ENCODE measurements at regions of chr1 and their contacts with region 1.

Region 1: GRCh38 chr1:228989992-228990827 is 254.9 kb downstream of the RHOU start:
- DNase-seq: peak; percentile 93
- H3K4me3 ChIP-seq: no peak overlapping the region
- H3K27ac ChIP-seq: peak overlapping the region; percentile 15 to 82 (median 70)
- H3K4me1 ChIP-seq: peaks cover 0 to 53% (median 44%) of the 10 kb centered on the region in 4 donors
- H3K27me3 ChIP-seq: no peaks in the 10 kb centered on the region
- CTCF ChIP-seq: no peak
- EP300 ChIP-seq: peak in 3 of 4 donors; percentile 31 to 78 (median 40)
- POLR2A ChIP-seq: no peak

Region 2: GRCh38 chr1:228366866-228367741 is 623.1 kb before region 1 on chr1:
- intact Hi-C with region 1: no loop called
- DNase-seq: peak; percentile 58
- H3K4me3 ChIP-seq: no peak overlapping the region
- H3K27ac ChIP-seq: no peak overlapping the region
- H3K4me1 ChIP-seq: no peaks in the 10 kb centered on the region
- H3K27me3 ChIP-seq: peaks cover 0 to 31% (median 0%) of the 10 kb centered on the region in 3 donors
- CTCF ChIP-seq: no peak
- EP300 ChIP-seq: no peak
- POLR2A ChIP-seq: no peak

Region 3: DNA sequence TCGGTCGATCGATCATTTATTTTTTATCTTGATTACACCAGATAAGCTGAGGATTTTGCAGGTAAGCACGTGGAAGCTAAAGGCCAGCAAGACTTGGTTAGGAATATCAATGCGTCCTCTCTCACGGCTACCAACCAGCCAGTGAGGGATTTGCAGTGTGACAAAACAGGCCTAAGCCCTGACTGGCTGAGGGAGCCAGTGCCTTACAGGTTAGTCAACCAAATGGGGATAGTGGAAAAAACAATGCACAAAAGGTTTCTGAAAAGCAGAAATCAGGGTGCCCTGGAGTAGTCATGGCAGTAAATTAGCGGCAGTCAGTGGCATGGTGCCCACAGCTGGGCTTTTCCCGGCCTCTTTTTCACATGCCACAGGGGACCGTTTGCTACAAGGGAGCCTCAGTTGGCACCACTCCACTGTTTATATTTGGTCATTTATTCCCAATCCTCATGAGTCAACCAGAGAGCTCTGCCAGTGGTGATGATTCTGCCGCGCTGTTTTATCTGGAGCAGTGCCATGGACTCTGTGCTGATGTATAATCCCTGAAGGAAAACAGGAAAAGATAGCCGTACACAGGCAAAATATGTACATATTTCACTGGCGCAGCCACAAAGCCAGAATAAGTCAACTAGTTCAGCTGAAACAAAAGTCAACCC is 87.3 kb before region 1 on chr1:
- intact Hi-C with region 1: loop called (anchors 5 kb)
- DNase-seq: peak; percentile 95
- H3K4me3 ChIP-seq: no peak overlapping the region
- H3K27ac ChIP-seq: peak overlapping the region; percentile 42 to 81 (median 69)
- H3K4me1 ChIP-seq: peaks cover 0 to 46% (median 43%) of the 10 kb centered on the region in 4 donors
- H3K27me3 ChIP-seq: no peaks in the 10 kb centered on the region
- CTCF ChIP-seq: no peak
- EP300 ChIP-seq: no peak
- POLR2A ChIP-seq: no peak

Region 4: DNA sequence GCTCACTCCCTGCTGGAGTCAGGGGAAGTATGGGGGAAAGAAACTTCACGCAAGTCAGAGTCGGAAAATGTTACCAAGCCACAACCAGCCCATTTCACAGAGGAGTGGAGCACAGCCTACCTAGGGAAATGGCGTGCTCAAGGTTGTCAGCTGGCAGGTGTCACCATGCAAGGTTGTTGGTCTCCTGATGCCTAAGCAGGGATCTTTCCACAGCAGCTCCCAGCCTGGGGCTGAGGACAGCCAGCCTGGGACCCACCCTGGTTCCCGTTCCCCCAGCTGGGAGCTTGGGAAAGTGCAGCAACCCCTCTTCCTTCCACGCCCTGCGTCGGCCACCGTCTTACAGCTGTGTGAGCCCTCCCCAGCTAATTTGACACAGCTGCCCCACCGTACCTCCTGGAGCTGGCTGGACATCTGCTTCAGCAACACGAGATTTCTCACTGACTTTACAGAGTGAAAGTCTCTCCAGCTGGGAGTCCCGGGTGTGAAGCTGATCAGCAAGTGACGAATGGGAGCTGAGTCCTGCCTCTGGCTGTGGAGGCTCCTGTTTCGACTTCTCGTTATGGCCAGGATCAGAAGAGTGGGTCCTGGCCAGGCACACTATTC is 56.1 kb after region 1 on chr1:
- intact Hi-C with region 1: no loop called
- DNase-seq: no peak
- H3K4me3 ChIP-seq: no peak overlapping the region
- H3K27ac ChIP-seq: no peak overlapping the region
- H3K4me1 ChIP-seq: no peaks in the 10 kb centered on the region
- H3K27me3 ChIP-seq: no peaks in the 10 kb centered on the region
- CTCF ChIP-seq: no peak
- EP300 ChIP-seq: no peak
- POLR2A ChIP-seq: no peak